Mammary epithelial cell (primary cell): ENCODE measurements at regions of chr1 and their contacts with region 1.

Region 1: DNA sequence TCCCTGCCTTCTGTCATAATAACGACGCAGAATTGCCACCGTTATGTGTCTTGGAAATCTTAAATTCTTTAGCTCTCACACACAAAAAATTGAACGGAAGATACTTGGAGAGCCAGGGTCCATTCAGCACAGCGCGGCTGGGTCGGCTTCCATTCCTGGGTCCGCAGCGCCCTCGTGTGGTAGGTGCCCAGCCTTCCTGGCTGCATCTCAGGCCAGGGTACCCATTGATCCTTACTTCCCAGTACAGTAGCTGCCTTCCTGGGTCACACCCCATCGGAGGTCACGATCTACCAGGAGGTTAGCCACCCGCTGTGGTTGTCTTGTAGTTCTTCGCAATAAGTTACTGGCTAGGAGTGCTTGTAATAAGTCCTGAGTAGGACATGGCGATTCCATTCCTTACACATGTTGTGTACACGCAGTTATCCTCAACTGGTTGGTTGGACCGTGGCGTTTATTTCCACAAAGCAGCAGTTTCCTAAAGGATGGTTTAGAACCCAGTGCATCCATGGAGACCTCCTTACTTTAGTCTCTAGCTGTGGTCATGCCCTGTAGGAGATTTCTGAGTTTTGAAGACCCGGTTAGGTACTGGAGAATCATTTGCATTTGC is 9.9 kb upstream of the MTARC1 start:
- DNase-seq: peak; percentile 48
- H3K4me3 ChIP-seq: no peak overlapping the region
- H3K27ac ChIP-seq: no peak overlapping the region
- H3K4me1 ChIP-seq: no peaks in the 10 kb centered on the region
- H3K27me3 ChIP-seq: no peaks in the 10 kb centered on the region
- CTCF ChIP-seq: peak; percentile 93

Region 2: DNA sequence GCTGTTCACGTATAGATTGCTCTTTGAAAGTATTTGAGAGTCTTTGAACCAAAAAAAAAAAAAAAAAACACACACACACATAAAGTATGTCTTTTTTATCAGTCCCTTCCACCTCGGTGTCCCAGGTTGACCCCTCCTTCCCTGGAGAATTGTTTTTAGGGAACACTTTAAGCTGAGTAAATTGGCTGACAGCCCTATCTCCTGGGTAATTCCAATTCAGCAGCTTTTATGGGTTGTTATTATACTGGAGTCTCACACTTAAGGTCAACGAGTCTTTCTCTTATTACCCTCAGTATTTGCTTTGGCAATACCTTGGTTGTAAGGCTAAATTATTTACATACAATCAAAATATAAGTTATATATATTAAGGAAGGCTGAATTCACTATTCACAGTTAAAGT is 917.8 kb before region 1 on chr1:
- CTCF ChIA-PET with region 1: no interaction called
- dilution Hi-C with region 1: no loop called
- in situ Hi-C with region 1: loop called in 1 of 2 experiments (anchors 25 kb)
- intact Hi-C with region 1: no loop called
- DNase-seq: no peak
- H3K4me3 ChIP-seq: no peak overlapping the region
- H3K27ac ChIP-seq: no peak overlapping the region
- H3K4me1 ChIP-seq: no peaks in the 10 kb centered on the region
- H3K27me3 ChIP-seq: no peaks in the 10 kb centered on the region
- CTCF ChIP-seq: no peak

Region 3: DNA sequence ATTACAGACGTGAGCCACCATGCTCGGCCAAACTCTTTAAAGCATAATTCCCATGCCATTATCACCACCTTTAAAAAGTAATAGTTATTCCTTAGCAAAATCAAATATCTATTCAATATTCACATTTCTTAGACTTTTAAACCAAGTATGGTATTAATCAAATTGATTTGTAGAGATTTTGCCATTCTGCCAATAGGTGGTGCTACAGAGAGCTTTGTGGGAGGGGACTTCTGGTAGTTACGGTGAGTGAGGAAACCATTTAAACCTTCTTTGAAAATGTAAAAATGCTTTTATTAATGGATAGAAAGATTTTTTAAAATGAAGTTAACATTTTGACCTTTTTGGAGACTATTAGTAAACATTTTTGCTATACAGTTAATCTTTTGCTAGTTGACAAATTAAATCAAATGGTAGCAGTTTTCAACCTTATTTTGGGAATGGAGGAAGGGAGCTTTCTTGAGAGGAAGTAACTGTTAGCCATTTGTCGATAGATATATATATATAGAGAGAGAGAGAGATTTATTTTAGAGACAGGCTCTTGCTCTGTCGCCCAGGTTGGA is 663.6 kb before region 1 on chr1:
- CTCF ChIA-PET with region 1: no interaction called
- dilution Hi-C with region 1: no loop called
- in situ Hi-C with region 1: no loop called
- intact Hi-C with region 1: loop called (anchors 1 kb)
- DNase-seq: peak; percentile 3
- H3K4me3 ChIP-seq: no peak overlapping the region
- H3K27ac ChIP-seq: no peak overlapping the region
- H3K4me1 ChIP-seq: no peaks in the 10 kb centered on the region
- H3K27me3 ChIP-seq: no peaks in the 10 kb centered on the region
- CTCF ChIP-seq: peak; percentile 48 to 53

Region 4: GRCh38 chr1:220281159-220281574 is 495.7 kb before region 1 on chr1:
- CTCF ChIA-PET with region 1: no interaction called
- dilution Hi-C with region 1: no loop called
- in situ Hi-C with region 1: no loop called
- intact Hi-C with region 1: loop called (anchors 1 kb)
- DNase-seq: peak; percentile 32
- H3K4me3 ChIP-seq: no peak overlapping the region
- H3K27ac ChIP-seq: no peak overlapping the region
- H3K4me1 ChIP-seq: no peaks in the 10 kb centered on the region
- H3K27me3 ChIP-seq: no peaks in the 10 kb centered on the region
- CTCF ChIP-seq: peak; percentile 62 to 63

Region 5: GRCh38 chr1:220391479-220391878 is 385.3 kb before region 1 on chr1:
- CTCF ChIA-PET with region 1: no interaction called
- dilution Hi-C with region 1: no loop called
- in situ Hi-C with region 1: no loop called
- intact Hi-C with region 1: no loop called
- DNase-seq: peak; percentile 14
- H3K4me3 ChIP-seq: no peak overlapping the region
- H3K27ac ChIP-seq: no peak overlapping the region
- H3K4me1 ChIP-seq: no peaks in the 10 kb centered on the region
- H3K27me3 ChIP-seq: no peaks in the 10 kb centered on the region
- CTCF ChIP-seq: no peak

Region 6: DNA sequence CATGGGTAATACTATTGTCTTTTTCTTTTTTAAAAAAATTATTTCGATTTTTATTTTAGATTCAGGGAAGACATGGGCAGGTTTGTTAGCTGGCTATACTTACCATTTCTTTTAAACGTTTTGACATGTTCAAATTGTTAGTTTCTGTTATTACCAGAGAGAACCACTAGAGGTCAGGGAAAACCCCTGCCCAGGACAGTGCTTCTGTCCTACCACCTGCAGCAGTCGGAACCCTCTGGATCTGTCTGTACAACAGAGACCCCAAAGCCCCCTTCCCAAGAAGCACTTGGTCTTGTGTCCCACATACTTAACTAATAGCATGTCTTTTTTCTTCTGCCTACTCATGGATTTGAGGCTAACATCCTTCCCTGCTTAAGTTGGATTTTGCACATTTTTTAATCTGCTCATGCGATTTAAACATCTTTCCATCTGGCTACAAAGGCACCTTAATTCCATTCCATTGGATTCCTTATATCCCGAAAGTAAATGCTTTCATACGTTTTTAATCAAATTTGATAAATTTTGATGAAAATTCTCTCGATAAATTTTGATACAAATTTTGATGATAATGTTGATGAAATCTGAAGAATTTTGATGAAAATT is 96.6 kb before region 1 on chr1:
- CTCF ChIA-PET with region 1: no interaction called
- dilution Hi-C with region 1: no loop called
- in situ Hi-C with region 1: loop called in 1 of 2 experiments (anchors 10 kb)
- intact Hi-C with region 1: no loop called
- DNase-seq: peak; percentile 32
- H3K4me3 ChIP-seq: no peak overlapping the region
- H3K27ac ChIP-seq: no peak overlapping the region
- H3K4me1 ChIP-seq: no peaks in the 10 kb centered on the region
- H3K27me3 ChIP-seq: no peaks in the 10 kb centered on the region
- CTCF ChIP-seq: peak; percentile 57 to 83

Region 7: GRCh38 chr1:220733090-220733601 is 43.7 kb before region 1 on chr1:
- CTCF ChIA-PET with region 1: interaction called, 4 read pairs
- dilution Hi-C with region 1: no loop called
- in situ Hi-C with region 1: no loop called
- intact Hi-C with region 1: loop called (anchors 2 kb)
- DNase-seq: peak; percentile 83
- H3K4me3 ChIP-seq: peak overlapping the region in 1 of 3 experiments; percentile 14
- H3K27ac ChIP-seq: peak overlapping the region; percentile 22
- H3K4me1 ChIP-seq: peaks cover 19% of the 10 kb centered on the region
- H3K27me3 ChIP-seq: no peaks in the 10 kb centered on the region
- CTCF ChIP-seq: peak; percentile 75 to 86

Region 8: DNA sequence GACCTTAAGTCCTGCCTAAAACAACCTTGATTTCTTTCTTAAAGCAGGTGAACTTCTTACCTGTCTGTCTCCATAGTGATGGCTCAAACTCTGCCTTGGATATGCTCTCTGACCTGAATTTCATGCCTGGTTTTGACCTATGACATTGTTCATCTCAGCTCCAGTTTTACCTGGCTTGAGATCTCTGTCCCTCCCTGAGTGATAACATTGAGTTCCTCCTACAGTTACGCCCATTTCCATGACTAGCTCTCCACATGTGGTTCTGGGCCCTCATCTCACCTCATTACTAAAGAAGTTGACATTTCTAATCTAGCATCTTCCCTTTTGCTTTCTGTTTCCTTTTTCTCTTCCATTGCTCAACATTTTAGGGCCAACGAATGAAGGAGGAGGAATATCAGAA is 1538.0 kb after region 1 on chr1:
- CTCF ChIA-PET with region 1: no interaction called
- dilution Hi-C with region 1: no loop called
- in situ Hi-C with region 1: no loop called
- intact Hi-C with region 1: no loop called
- DNase-seq: no peak
- H3K4me3 ChIP-seq: no peak overlapping the region
- H3K27ac ChIP-seq: no peak overlapping the region
- H3K4me1 ChIP-seq: no peaks in the 10 kb centered on the region
- H3K27me3 ChIP-seq: no peaks in the 10 kb centered on the region
- CTCF ChIP-seq: no peak